Activated CD4-positive, alpha-beta memory T cell treated with anti-CD3 and anti-CD28 coated beads for 36 hours (primary cell): ENCODE measurements at regions of chr1 and their contacts with region 1.

Region 1: DNA sequence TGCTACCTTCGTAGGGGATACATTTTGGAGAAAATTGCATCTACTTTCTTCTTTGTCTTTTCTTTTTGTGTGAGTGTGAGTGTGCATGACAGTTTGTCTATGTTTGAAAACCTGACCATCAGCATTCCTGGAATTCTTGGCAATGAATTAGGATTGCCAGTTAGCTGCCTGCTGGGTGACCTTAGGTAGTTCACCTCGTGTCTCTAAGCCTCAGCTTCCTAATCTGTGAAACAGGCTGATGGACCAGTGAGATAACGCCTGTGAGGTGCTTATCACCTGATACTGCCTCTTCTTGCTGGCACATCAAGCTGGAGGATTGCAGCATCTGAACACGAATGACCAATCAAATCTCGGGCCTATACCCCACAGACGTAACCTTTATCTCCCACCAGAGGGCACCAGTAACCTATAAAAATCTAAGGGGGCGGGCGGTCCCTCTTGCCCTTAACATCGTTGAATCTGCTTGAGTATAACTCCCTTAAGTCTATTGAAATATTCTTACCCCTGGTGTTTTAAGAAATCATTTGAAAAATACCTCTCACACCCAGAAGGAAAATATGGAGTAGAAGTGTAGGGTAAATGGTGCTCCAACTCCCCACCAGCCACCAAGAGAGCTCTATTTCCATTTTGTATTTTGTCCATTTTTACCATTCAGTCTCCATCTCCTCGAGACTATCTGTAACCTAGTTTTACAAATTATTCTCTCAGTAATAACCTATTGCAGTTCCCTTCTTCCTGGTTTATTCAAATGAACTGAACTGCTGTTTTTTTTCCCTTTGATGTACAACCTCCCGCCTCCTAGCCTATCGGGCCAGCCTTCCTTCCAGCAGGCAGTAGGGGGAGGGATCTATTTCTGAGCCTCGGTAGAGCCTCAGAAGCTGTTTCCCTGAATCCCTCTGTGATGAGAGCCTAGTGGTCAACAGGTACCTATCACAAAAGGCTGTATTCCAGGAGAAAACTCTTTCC is 49.7 kb downstream of the MDM4 start:
- DNase-seq: peak; percentile 70
- H3K4me3 Mint-ChIP-seq: no peak overlapping the region
- H3K27ac Mint-ChIP-seq: peak overlapping the region; percentile 73
- H3K4me1 Mint-ChIP-seq: peaks cover 46% of the 10 kb centered on the region
- H3K27me3 Mint-ChIP-seq: no peaks in the 10 kb centered on the region

Region 2: GRCh38 chr1:203556047-203556851 is 1009.7 kb before region 1 on chr1:
- CTCF ChIA-PET with region 1: no interaction called
- POLR2A ChIA-PET with region 1: no interaction called
- intact Hi-C with region 1: no loop called
- DNase-seq: no peak
- H3K4me3 Mint-ChIP-seq: no peak overlapping the region
- H3K27ac Mint-ChIP-seq: no peak overlapping the region
- H3K4me1 Mint-ChIP-seq: no peaks in the 10 kb centered on the region
- H3K27me3 Mint-ChIP-seq: peaks cover 2% of the 10 kb centered on the region

Region 3: DNA sequence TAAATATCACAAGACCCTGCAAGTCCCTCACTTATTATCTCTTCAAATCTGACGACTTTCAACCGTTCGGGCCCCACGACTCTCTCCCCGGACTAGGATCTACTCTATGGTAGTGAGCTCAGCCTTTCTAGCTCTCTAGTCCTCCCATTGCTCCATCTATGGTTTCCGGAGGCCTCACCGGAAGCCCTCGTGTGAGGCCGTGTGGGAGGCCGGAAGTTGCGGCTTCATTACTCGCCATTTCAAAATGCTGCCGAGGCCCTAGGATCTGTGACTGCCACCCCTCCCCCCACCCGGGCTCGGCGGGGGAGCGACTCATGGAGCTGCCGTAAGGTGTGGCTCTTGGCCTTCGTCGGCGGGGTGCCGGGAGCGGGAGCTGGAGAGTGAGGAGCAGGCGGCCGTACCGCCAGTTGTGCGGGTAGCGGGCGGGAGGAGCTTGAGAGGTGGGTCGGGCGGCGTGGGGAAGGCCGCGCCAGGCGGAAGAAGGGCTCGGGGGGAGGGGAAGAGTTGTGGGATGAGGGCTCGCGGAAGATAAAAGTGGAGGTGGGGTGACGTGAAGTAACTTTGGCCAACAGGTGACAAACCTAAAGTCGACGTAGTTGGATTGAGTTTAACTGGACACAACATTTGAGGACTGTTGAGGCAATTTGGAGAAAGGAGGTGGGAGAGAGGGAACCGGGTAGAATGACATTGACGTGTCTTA is 49.6 kb before region 1 on chr1 and contains the start of gene MDM4:
- CTCF ChIA-PET with region 1: interaction called, 7 read pairs
- POLR2A ChIA-PET with region 1: interaction called, 3 read pairs
- intact Hi-C with region 1: loop called (anchors 1 kb)
- DNase-seq: peak; percentile 97
- H3K4me3 Mint-ChIP-seq: no peak within 1 kb of the TSS
- H3K27ac Mint-ChIP-seq: no peak within 1 kb of the TSS
- H3K4me1 Mint-ChIP-seq: peaks cover 52% of the 10 kb centered on the region
- H3K27me3 Mint-ChIP-seq: no peaks in the 10 kb centered on the region
- total RNA-seq, gene MDM4: 88.0 to 90.8 TPM

Region 4: DNA sequence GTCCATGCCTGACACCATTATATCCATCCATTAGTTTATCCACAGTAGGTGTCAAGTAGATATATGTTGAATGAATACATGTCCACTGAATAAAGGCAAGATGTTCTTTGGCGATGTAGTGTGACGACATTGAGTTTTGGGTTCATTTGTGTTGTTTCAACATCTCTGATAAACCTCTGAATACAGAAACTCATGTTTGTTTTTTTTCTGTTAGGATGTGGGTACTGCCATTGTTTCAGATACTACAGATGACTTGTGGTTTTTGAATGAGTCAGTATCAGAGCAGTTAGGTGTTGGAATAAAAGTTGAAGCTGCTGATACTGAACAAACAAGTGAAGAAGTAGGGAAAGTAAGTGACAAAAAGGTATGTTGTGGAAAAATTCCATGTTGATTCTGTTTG is 21.6 kb before region 1 on chr1:
- CTCF ChIA-PET with region 1: interaction called, 10 read pairs
- POLR2A ChIA-PET with region 1: interaction called, 3 read pairs
- intact Hi-C with region 1: loop called (anchors 2 kb)
- DNase-seq: no peak
- H3K4me3 Mint-ChIP-seq: no peak overlapping the region
- H3K27ac Mint-ChIP-seq: peak overlapping the region; percentile 68
- H3K4me1 Mint-ChIP-seq: peaks cover 43% of the 10 kb centered on the region
- H3K27me3 Mint-ChIP-seq: no peaks in the 10 kb centered on the region

Region 5: DNA sequence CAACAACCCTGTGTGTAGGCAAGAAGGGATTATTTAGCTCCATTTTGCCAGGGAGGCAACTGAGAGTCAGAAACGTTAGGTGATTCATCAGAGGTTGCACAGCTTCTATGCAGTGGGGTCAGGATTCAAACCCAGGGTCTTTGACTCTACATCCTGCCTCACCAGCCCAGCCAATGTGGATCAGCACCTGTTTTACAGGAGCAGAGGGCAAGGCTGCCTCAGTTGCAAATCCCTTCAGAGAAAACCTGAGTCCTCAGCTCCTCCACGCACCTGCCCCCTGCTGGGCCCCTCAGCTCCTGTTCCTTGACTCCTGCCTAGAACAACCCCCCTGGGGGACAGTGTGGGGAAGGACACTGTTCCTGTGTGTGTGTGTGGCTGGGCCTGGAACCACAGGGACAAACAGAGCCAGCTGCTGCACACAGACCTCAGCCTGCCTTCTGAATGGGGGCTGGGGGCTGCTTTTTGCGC is 58.0 kb after region 1 on chr1:
- CTCF ChIA-PET with region 1: interaction called, 10 read pairs
- POLR2A ChIA-PET with region 1: no interaction called
- intact Hi-C with region 1: loop called (anchors 5 kb)
- DNase-seq: peak; percentile 30
- H3K4me3 Mint-ChIP-seq: no peak overlapping the region
- H3K27ac Mint-ChIP-seq: no peak overlapping the region
- H3K4me1 Mint-ChIP-seq: no peaks in the 10 kb centered on the region
- H3K27me3 Mint-ChIP-seq: no peaks in the 10 kb centered on the region

Region 6: GRCh38 chr1:204673909-204674649 is 108.2 kb after region 1 on chr1:
- CTCF ChIA-PET with region 1: no interaction called
- POLR2A ChIA-PET with region 1: no interaction called
- intact Hi-C with region 1: no loop called
- DNase-seq: no peak
- H3K4me3 Mint-ChIP-seq: no peak overlapping the region
- H3K27ac Mint-ChIP-seq: no peak overlapping the region
- H3K4me1 Mint-ChIP-seq: no peaks in the 10 kb centered on the region
- H3K27me3 Mint-ChIP-seq: peaks cover 7% of the 10 kb centered on the region

Region 7: GRCh38 chr1:204746838-204747442 is 181.0 kb after region 1 on chr1:
- CTCF ChIA-PET with region 1: interaction called, 11 read pairs
- POLR2A ChIA-PET with region 1: no interaction called
- intact Hi-C with region 1: no loop called
- DNase-seq: peak; percentile 62
- H3K4me3 Mint-ChIP-seq: no peak overlapping the region
- H3K27ac Mint-ChIP-seq: no peak overlapping the region
- H3K4me1 Mint-ChIP-seq: no peaks in the 10 kb centered on the region
- H3K27me3 Mint-ChIP-seq: peaks cover 23% of the 10 kb centered on the region

Region 8: DNA sequence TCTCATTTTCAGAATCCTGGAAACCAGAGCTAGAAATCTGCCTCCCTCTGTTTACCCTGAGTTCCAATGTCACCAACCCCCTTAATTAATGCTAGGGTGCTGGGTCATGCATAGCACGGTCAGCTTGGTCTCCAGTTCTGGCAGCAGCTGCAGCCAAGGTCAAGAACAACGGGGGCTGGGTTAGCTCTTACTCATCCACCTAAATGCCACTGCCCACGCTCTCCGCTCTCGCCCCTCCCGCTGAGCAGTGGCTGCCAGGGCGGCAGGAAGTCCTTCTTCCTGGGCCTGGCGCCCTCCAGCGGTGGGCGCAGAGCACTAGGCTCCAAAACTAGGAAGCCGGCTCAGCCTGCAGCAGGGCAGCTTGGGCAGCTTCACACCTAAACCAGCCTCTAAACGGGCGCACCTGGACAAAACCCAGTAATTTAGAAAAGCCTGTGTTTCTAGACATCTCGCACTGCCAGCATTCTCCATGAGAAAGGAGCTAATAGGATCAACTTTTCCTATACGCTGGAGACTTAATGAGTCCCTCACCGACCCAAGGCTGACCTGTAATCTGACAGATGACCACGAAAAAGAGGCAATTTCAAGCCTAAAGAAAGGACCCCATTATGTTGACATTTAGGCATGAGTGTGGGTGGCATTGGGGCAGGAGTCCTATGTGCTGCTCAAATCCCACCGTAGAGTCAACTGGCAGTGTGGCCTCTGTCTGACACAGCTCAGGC is 198.0 kb after region 1 on chr1:
- CTCF ChIA-PET with region 1: interaction called, 100 read pairs
- POLR2A ChIA-PET with region 1: no interaction called
- intact Hi-C with region 1: loop called (anchors 1 kb)
- DNase-seq: peak; percentile 88
- H3K4me3 Mint-ChIP-seq: no peak overlapping the region
- H3K27ac Mint-ChIP-seq: no peak overlapping the region
- H3K4me1 Mint-ChIP-seq: peaks cover 6% of the 10 kb centered on the region
- H3K27me3 Mint-ChIP-seq: peaks cover 9% of the 10 kb centered on the region

Region 9: DNA sequence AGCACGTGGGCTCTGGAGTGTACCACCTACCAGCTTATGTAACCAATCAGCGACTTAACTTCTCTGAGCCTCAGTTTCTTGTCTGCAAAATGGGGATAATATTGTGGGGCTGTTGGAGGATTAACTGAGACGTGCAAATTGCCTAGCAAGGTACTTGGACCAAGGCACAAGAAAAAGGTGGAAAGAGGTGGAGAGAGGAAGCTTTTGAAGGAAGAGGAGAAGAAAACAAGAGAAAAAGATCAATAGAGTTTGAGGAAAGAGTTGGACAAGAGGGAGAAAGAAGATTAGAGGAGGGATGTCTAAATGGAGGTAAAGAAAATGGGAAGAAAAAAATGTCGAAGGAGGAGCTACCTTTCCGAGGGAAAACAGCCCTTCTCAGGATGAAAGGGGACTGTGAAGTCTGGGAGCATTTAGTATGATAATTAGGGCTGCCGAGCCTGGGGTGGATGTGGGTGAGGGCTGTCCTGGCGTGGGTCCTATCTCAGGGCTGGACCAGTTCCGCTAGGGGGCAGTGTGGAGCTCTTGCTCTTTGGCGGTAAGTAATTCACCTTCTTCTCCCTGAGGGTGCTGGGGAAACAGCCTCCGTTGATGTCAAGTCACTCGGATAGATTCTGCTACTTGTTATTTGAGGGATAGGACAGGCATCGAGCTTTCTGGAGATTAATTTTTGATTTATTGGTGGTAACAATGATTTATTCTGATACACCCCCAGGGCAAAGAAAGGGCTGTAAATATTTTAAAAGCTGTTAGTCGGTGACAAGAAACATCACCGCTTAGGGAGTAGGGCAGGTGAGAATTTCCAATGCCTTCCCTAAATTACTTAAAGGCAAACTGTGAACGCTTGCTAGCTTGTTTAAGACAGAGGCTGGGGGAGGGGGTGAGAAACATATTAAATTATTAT is 225.8 kb after region 1 on chr1:
- CTCF ChIA-PET with region 1: interaction called, 13 read pairs
- POLR2A ChIA-PET with region 1: no interaction called
- intact Hi-C with region 1: no loop called
- DNase-seq: peak; percentile 86
- H3K4me3 Mint-ChIP-seq: no peak overlapping the region
- H3K27ac Mint-ChIP-seq: no peak overlapping the region
- H3K4me1 Mint-ChIP-seq: no peaks in the 10 kb centered on the region
- H3K27me3 Mint-ChIP-seq: peaks cover 23% of the 10 kb centered on the region